GM12878 (cell line): ENCODE measurements at regions of chr16 and their contacts with region 1.

Region 1: GRCh38 chr16:31700526-31701388 is 172.8 kb upstream of the ZNF267 start:
- DNase-seq: peak; percentile 67
- ATAC-seq: peak; percentile 95
- H3K4me3 ChIP-seq: peak overlapping the region; percentile 91
- H3K27ac ChIP-seq: peak overlapping the region; percentile 88
- H3K4me1 ChIP-seq: peaks cover 5% of the 10 kb centered on the region; the same call in 1 of the 2 replicates
- H3K27me3 ChIP-seq: no peaks in the 10 kb centered on the region
- CTCF ChIP-seq: peak in 2 of 3 experiments; percentile 6 to 7; a peak in 1 of 6 replicates
- EP300 ChIP-seq: peak; percentile 52 to 81; a peak in 3 of 4 replicates
- POLR2A ChIP-seq: peak; percentile 80
- RAD21 ChIP-seq: no peak

Region 2: DNA sequence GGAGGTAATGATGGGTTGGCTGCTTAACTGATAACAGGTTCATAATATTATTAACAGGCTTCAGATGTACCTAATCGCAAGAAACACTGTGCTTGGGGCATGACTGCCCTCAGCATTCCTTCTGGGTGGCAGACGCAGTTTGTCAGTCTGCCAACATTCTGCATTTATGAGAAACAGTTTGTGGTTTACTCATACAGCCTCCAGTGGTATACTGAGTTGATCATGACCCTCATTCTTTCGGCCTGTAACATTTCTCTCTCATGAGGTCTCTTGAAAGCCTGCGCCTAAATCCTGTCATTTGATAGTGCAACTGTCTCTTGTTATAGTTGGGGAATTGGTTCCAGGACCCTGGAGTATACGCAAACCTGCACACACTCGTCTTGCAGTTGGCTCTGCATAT is 187.6 kb before region 1 on chr16:
- CTCF ChIA-PET with region 1: no interaction called
- POLR2A ChIA-PET with region 1: interaction called, 3 read pairs
- RAD21 ChIA-PET with region 1: no interaction called
- SMC1A ChIA-PET with region 1: no interaction called
- in situ Hi-C with region 1: loop called (anchors 5 kb)
- intact Hi-C with region 1: no loop called
- DNase-seq: no peak
- ATAC-seq: no peak
- H3K4me3 ChIP-seq: no peak overlapping the region
- H3K27ac ChIP-seq: no peak overlapping the region
- H3K4me1 ChIP-seq: no peaks in the 10 kb centered on the region
- H3K27me3 ChIP-seq: no peaks in the 10 kb centered on the region
- CTCF ChIP-seq: no peak
- EP300 ChIP-seq: no peak
- POLR2A ChIP-seq: no peak
- RAD21 ChIP-seq: no peak

Region 3: GRCh38 chr16:31713071-31713944 is 12.6 kb after region 1 on chr16:
- CTCF ChIA-PET with region 1: interaction called, 45 read pairs
- POLR2A ChIA-PET with region 1: interaction called, 32 read pairs
- RAD21 ChIA-PET with region 1: interaction called, 9 read pairs
- SMC1A ChIA-PET with region 1: interaction called, 16 read pairs
- in situ Hi-C with region 1: no loop called
- intact Hi-C with region 1: loop called (anchors 1 kb)
- DNase-seq: peak; percentile 79
- ATAC-seq: peak; percentile 94
- H3K4me3 ChIP-seq: peak overlapping the region; percentile 75
- H3K27ac ChIP-seq: peak overlapping the region; percentile 96
- H3K4me1 ChIP-seq: peaks cover 6% of the 10 kb centered on the region
- H3K27me3 ChIP-seq: no peaks in the 10 kb centered on the region
- CTCF ChIP-seq: no peak
- EP300 ChIP-seq: no peak
- POLR2A ChIP-seq: peak; percentile 97
- RAD21 ChIP-seq: no peak